Head of caudate nucleus (tissue), 42 donors: ENCODE measurements at regions of chr6 and their contacts with region 1.

Region 1: GRCh38 chr6:83057705-83058321 is 7.8 kb downstream of the UBE3D start:
- DNase-seq: peak in 40 of 42 donors; percentile 22 to 86 (median 58)

Region 2: GRCh38 chr6:82251942-82252341 is 805.9 kb before region 1 on chr6:
- intact Hi-C with region 1: loop called (anchors 5 kb)
- DNase-seq: peak in 1 of 42 donors; percentile 41

Region 3: DNA sequence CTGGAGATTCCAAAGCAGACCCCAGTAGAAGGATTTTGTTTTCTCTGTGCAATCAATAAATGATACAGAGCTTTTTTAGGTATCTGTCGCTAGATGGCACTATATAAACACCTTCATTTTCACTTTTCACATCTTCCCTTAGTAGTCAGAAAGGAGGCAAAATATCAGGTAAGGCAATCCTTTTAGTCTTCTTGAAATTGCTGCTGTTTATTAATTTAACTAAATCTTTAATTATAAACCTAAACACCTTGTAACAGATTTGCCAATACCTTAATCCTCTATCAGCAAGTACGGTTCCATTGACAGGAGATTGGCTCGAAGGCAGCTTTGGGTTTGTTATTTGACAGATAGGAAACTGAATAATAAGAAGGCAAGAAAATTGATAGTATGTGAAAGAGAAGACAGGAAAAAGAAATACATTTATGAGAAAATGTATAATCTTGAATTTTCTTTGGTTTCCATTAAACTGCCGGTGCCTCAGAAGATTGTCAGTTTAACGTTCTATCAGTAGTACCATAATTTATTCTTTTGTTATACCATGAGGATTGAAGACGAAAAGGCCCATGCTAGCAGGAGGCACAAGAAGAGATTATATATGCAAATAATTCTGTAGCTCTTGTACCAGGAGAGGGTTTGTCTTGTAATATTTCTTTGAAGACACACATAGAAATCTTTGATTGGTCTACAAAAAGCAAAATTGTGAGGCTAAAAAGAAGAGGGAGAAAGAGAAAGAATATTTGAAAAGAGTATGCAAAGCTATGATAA is 786.8 kb before region 1 on chr6:
- intact Hi-C with region 1: loop called (anchors 5 kb)
- DNase-seq: no peak